Cardiac septum (tissue), 1 donor: ENCODE measurements at regions of chrX and their contacts with region 1.

Region 1: GRCh38 chrX:2500267-2501075 is at the starts of genes DHRSX and ZBED1:
- DNase-seq: peak; percentile 81
- total RNA-seq, gene DHRSX: 24.9 TPM
- total RNA-seq, gene ZBED1: 45.1 TPM

Region 2: GRCh38 chrX:2325076-2325784 is 175.2 kb before region 1 on chrX:
- intact Hi-C with region 1: loop called (anchors 5 kb)
- DNase-seq: peak; percentile 86

Region 3: DNA sequence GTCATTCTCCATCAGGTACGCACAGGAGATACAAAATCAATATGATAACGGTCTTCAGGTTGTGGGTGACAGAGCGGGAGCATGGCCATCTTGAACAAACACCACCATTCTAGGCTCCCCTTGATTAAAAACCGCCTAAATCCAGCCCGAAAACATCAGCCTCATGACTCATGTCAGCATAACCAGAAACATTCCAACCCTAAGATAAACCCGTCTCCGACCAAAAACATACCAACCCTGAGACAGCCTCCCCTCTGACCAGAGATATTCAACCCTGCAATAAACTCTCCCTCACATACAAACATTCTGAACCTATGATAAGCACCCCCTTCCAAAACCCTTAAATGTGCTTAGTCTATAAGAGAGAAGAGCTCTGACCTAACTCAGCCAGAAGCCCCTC is 157.6 kb before region 1 on chrX:
- intact Hi-C with region 1: loop called (anchors 5 kb)
- DNase-seq: no peak

Region 4: GRCh38 chrX:2516626-2517025 is 16.2 kb after region 1 on chrX:
- intact Hi-C with region 1: no loop called
- DNase-seq: no peak

Region 5: DNA sequence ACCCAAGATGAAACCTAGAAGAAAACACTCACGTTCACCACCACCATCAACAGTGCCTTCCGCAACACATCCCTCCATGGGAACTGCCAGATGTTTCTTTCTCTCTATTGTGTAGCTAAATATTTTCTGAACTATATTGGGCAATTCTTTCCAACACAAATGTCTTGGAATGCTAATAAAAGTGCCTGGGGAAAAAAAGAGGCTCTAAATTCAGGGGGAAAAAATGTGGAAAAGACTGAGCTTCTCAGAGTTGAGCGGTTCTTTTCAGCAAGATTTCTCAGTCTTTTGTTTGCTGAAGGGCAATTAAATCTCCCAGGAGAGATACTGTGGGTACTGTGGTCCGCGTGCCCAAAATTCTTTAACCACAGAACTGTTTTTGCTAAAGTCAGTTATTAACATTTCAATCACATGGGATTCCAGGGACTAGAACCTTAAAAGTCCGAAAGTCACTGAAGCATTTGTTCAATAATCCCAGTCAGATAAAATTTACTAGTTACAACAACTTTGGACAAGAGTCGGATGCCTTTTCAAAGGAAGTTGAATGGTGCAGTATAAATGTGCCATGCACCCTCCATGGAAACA is 52.2 kb after region 1 on chrX:
- intact Hi-C with region 1: no loop called
- DNase-seq: no peak

Region 6: GRCh38 chrX:2608638-2609430 is 108.4 kb after region 1 on chrX:
- intact Hi-C with region 1: no loop called
- DNase-seq: peak; percentile 95

Region 7: GRCh38 chrX:2690856-2691542 is 190.5 kb after region 1 on chrX and contains the start of gene CD99:
- intact Hi-C with region 1: loop called (anchors 10 kb)
- DNase-seq: peak; percentile 93
- total RNA-seq, gene CD99: 327 TPM